ENCODE measurements at regions of chr3 and their contacts with region 1.

Region 1: GRCh38 chr3:50356553-50356952 is 2.8 kb downstream of the TMEM115 start:
- DNase-seq: no peak
- H3K4me3 ChIP-seq: peak overlapping the region in 2 of 7 experiments; percentile 84 to 95
- H3K27ac ChIP-seq: peak overlapping the region in 1 of 2 experiments; percentile 95
- H3K4me1 ChIP-seq: peaks cover 11 to 49% (median 40%) of the 10 kb centered on the region in 4 experiments
- H3K27me3 ChIP-seq: no peaks in the 10 kb centered on the region

Region 2: GRCh38 chr3:50028336-50028735 is 328.2 kb before region 1 on chr3:
- CTCF ChIA-PET with region 1: no interaction called
- POLR2A ChIA-PET with region 1: no interaction called
- DNase-seq: no peak
- H3K4me3 ChIP-seq: no peak overlapping the region
- H3K27ac ChIP-seq: no peak overlapping the region
- H3K4me1 ChIP-seq: no peaks in the 10 kb centered on the region
- H3K27me3 ChIP-seq: no peaks in the 10 kb centered on the region

Region 3: DNA sequence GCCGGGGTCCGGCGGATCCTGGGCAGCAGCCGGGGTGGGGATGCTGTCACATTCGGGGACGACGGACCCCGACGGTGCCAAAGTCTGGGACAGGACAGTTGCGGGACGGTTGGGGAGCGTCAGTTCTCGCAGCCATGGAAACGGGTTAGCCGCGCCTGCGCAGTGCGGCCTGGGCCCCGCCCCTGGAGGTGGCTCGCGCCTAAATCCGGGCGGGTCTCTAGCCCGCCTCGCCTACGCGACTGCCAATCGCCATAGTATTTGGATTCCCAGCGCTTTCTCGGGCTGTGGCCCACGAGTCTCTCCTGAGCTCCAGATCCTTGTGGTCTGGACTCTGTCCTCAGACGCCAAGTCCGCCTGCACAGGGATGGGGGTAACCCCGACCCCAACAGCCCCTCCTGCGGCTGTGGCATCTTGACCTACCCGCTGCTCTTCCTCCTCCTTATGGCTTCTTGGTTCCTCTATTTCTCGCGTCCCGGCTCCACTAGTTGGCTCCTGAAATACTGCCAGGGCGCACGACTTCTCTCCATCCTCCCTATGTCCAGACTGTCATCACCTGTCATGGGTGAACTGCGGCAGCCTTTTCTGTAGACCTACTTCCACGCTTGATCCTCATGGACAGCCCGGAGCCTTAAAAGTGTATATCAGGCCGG is 10.8 kb before region 1 on chr3 and contains the start of gene ZMYND10:
- CTCF ChIA-PET with region 1: interaction called, 51 read pairs
- POLR2A ChIA-PET with region 1: interaction called, 8 read pairs
- DNase-seq: peak; percentile 55 to 70 (median 63)
- H3K4me3 ChIP-seq: peak within 1 kb of the TSS; percentile 8 to 80 (median 53)
- H3K27ac ChIP-seq: no peak within 1 kb of the TSS
- H3K4me1 ChIP-seq: peaks cover 6 to 63% (median 52%) of the 10 kb centered on the region in 4 experiments
- H3K27me3 ChIP-seq: no peaks in the 10 kb centered on the region